BJ (cell line): ENCODE measurements at regions of chr2 and their contacts with region 1.

Region 1: GRCh38 chr2:69816923-69817542 is 12.4 kb upstream of the GMCL1 start:
- DNase-seq: peak; percentile 50
- H3K4me3 ChIP-seq: no peak overlapping the region
- H3K27me3 ChIP-seq: no peaks in the 10 kb centered on the region
- CTCF ChIP-seq: peak; percentile 79

Region 2: GRCh38 chr2:69741619-69742466 is 75.2 kb before region 1 on chr2 and contains the start of gene ANXA4:
- CTCF ChIA-PET with region 1: interaction called, 18 read pairs
- POLR2A ChIA-PET with region 1: no interaction called
- DNase-seq: no peak
- H3K4me3 ChIP-seq: peak within 1 kb of the TSS; percentile 80
- H3K27me3 ChIP-seq: no peaks in the 10 kb centered on the region
- CTCF ChIP-seq: no peak
- polyA plus RNA-seq, gene ANXA4: 127 and 133 TPM in 2 replicates

Region 3: GRCh38 chr2:69798909-69799526 is 18.0 kb before region 1 on chr2:
- CTCF ChIA-PET with region 1: interaction called, 23 read pairs
- POLR2A ChIA-PET with region 1: no interaction called
- DNase-seq: no peak
- H3K4me3 ChIP-seq: peak overlapping the region; percentile 33
- H3K27me3 ChIP-seq: no peaks in the 10 kb centered on the region
- CTCF ChIP-seq: no peak

Region 4: DNA sequence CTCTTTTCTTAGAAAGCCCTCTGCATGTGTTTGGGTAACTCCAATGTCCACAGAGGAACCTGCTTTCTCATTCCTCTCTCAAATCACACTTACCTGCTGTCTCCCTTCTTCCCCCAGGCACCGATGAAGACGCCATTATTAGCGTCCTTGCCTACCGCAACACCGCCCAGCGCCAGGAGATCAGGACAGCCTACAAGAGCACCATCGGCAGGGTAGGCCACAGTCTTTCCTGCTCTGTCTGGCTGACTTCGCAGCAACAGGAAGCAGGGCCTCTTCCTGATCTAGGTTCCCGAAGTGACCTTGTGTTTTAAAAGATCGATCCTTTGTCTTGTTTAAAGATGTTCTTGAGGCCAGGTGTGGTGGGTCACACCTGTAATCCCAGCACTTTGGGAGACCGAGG is 12.6 kb before region 1 on chr2:
- CTCF ChIA-PET with region 1: interaction called, 23 read pairs
- POLR2A ChIA-PET with region 1: no interaction called
- DNase-seq: no peak
- H3K4me3 ChIP-seq: no peak overlapping the region
- H3K27me3 ChIP-seq: no peaks in the 10 kb centered on the region
- CTCF ChIP-seq: no peak

Region 5: DNA sequence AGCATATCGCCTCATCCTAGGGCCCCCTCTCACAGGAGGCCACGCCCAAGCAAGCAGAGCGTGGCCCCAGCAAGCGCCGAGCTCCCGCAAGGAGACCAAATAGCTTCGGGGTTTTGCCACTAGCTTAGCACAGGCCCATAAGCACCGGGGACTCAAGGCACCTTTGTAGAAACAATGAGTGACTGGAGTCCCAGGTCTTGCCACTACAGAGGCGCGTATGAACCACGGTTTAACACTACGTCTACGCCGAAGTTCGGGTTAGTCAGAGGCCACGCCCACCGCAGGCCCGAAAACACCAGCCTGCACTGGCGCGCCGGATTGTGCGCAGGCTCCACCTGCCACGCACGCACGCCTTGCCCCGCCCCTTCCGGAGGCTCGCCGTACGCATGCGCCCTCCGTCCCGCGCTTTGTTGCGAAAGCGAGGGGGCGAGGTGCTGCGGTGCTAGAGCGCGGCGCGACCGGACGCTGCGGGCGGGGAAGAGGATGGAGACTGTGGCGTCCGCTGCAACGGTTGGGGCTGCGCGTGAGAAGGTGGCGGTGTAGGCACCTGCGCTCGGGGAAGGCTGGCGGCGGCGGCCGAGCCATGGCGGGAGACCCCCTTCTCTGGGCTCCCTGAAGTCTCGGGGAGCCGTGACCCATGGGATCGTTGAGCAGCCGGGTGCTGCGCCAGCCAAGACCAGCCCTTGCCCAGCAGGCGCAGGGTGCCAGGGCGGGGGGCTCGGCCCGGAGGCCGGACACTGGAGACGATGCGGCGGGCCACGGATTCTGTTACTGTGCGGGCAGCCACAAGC is 12.4 kb after region 1 on chr2 and contains the start of gene GMCL1:
- CTCF ChIA-PET with region 1: interaction called, 27 read pairs
- POLR2A ChIA-PET with region 1: no interaction called
- DNase-seq: peak; percentile 71
- H3K4me3 ChIP-seq: peak within 1 kb of the TSS; percentile 69
- H3K27me3 ChIP-seq: no peaks in the 10 kb centered on the region
- CTCF ChIP-seq: no peak
- polyA plus RNA-seq, gene GMCL1: 2.1 and 4.0 TPM in 2 replicates